ENCODE measurements at regions of chr14 and their contacts with region 1.

Region 1: DNA sequence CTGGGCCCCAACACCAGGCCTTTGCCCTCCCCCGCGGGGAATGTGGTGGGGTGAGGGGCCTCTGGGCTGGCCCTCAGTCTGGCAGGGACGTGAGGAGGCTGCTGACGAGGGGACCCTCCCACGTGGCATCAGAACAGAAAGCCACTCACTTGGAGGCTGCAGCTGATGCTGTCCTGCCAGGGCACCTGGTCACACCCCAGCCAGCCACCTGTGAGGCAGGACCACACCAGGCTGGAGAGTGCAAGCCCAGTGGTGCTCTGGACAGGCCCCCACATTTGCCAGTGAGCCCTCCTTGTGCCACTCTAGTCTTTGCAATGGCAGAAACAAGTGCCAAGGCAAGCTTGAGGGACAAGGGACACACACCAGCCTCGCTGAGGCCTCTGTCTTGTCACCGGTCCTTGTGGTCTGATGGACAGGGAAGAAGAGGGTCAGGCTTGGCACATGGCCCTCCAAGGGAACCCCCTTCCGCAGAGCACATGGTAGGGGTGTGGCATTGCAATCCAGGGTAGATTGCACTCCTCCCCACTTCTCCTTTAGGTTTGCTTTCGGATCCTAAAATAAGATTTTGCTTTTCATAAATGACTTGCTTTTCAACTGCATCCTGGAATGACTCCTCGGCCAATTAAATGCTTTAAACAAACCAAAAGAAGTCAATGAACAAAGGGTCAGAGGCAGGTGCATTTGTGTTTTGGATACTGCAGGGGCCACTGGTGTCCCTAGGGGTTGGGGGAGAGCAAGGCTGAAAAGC is 53.7 kb downstream of the CCDC88C start:
- DNase-seq: peak; percentile 94 to 97 (median 94)
- H3K4me3 ChIP-seq: peak overlapping the region in 1 of 3 experiments; percentile 38
- H3K4me3 Mint-ChIP-seq: peak overlapping the region in 1 of 2 donors; percentile 76
- H3K27ac ChIP-seq: peak overlapping the region; percentile 96 to 97
- H3K27ac Mint-ChIP-seq: peak overlapping the region; percentile 94 to 99 (median 96)
- H3K4me1 ChIP-seq: peaks cover 98 to 100% of the 10 kb centered on the region in 2 donors
- H3K4me1 Mint-ChIP-seq: peaks cover 97% of the 10 kb centered on the region
- H3K27me3 ChIP-seq: no peaks in the 10 kb centered on the region
- H3K27me3 Mint-ChIP-seq: no peaks in the 10 kb centered on the region
- CTCF ChIP-seq: no peak

Region 2: GRCh38 chr14:91323671-91324605 is 40.0 kb before region 1 on chr14:
- intact Hi-C with region 1: loop called in 1 of 2 experiments (anchors 5 kb)
- DNase-seq: peak; percentile 82 to 88 (median 86)
- H3K4me3 ChIP-seq: peak overlapping the region; percentile 39 to 73 (median 42)
- H3K4me3 Mint-ChIP-seq: peak overlapping the region; percentile 81 to 92
- H3K27ac ChIP-seq: peak overlapping the region; percentile 92 to 98
- H3K27ac Mint-ChIP-seq: peak overlapping the region; percentile 95 to 99 (median 99)
- H3K4me1 ChIP-seq: peaks cover 26 to 31% of the 10 kb centered on the region in 2 donors
- H3K4me1 Mint-ChIP-seq: peaks cover 44% of the 10 kb centered on the region
- H3K27me3 ChIP-seq: no peaks in the 10 kb centered on the region
- H3K27me3 Mint-ChIP-seq: peaks cover 0 to 1% (median 0%) of the 10 kb centered on the region in 3 donors
- CTCF ChIP-seq: peak; percentile 97

Region 3: DNA sequence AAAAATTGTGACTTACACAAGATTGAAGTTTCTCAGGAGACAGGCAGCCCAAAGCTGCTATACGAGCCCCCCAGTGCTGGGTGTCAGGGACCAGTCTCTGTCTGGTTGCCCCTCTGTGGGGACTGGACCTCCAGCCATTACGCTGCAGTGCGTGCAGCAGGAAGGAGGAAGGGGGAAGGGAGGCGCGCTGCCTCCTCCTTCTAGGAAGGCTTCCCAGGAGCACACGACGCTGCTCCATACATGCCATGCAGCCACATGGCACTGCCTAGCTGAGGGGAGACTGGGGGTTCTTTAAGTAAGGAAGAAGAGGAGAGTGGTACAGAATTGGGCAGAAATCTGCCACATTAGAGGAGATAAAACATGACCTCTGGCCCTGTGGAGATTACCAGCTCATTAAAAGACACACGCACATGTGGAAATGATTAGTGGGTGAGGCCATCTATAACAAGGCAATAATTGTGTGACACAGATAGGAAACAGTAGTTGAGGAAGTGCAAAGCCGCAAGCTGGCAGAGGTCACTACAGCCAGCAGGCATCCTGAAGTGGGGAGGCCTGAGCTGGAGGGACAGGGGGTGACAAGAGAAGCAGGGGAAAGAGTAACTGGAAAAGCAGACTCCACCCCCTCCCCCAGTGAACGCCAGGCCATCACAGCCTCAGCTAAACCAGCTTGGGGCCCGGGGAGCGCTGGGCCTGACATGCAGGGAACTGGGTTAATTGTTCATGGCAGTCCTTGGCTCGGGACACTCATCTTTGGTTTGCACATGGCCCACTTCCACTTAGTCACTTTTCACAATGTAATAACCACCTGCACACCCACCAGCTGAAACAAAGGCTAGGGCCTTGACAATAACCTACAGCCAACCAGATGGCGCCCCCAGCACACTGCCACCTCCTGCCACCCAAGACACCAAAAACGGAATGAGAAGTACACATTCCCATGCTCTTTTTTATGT is 14.0 kb after region 1 on chr14:
- intact Hi-C with region 1: loop called in 1 of 2 experiments (anchors 2 kb)
- DNase-seq: peak; percentile 77 to 81 (median 81)
- H3K4me3 ChIP-seq: peak overlapping the region in 1 of 3 experiments; percentile 60
- H3K4me3 Mint-ChIP-seq: peak overlapping the region; percentile 64 to 83
- H3K27ac ChIP-seq: peak overlapping the region; percentile 76 to 94
- H3K27ac Mint-ChIP-seq: peak overlapping the region; percentile 92 to 98 (median 97)
- H3K4me1 ChIP-seq: peaks cover 99 to 100% of the 10 kb centered on the region in 2 donors
- H3K4me1 Mint-ChIP-seq: peaks cover 100% of the 10 kb centered on the region
- H3K27me3 ChIP-seq: no peaks in the 10 kb centered on the region
- H3K27me3 Mint-ChIP-seq: peaks cover 0 to 2% (median 0%) of the 10 kb centered on the region in 3 donors
- CTCF ChIP-seq: no peak

Region 4: GRCh38 chr14:91396959-91397815 is 33.2 kb after region 1 on chr14:
- intact Hi-C with region 1: loop called (anchors 5 kb)
- DNase-seq: peak in 2 of 3 donors; percentile 44 to 49
- H3K4me3 ChIP-seq: peak overlapping the region; percentile 16 to 67 (median 24)
- H3K4me3 Mint-ChIP-seq: peak overlapping the region; percentile 75 to 92
- H3K27ac ChIP-seq: peak overlapping the region; percentile 83 to 84
- H3K27ac Mint-ChIP-seq: peak overlapping the region; percentile 88 to 96 (median 95)
- H3K4me1 ChIP-seq: peaks cover 93 to 94% of the 10 kb centered on the region in 2 donors
- H3K4me1 Mint-ChIP-seq: peaks cover 95% of the 10 kb centered on the region
- H3K27me3 ChIP-seq: no peaks in the 10 kb centered on the region
- H3K27me3 Mint-ChIP-seq: peaks cover 0 to 2% (median 1%) of the 10 kb centered on the region in 3 donors
- CTCF ChIP-seq: no peak